Mammary epithelial cell (primary cell): ENCODE measurements at regions of chr3 and their contacts with region 1.

Region 1: DNA sequence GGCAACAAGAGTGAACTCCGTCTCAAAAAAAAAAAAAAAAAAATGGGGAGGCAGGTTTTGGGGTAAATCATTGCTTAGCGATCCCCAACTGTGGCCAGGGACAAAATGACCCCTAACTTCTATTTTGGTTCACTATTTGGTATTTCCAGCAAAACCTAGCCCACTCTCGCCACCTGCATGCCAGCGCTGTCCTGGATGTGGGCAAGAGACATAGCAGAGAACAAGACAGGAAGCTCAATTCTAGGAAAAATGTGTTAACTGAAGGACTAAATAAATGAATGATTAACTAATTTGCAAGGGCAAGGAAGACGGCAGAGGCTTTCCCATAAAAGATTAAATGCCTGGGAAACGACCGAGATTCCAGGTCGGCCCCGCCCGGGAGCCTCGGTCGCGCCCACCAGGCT is 425 bp downstream of the NICN1 start:
- DNase-seq: no peak
- H3K4me3 ChIP-seq: peak overlapping the region; percentile 74 to 79 (median 76)
- H3K27ac ChIP-seq: no peak overlapping the region
- H3K4me1 ChIP-seq: peaks cover 6% of the 10 kb centered on the region
- H3K27me3 ChIP-seq: no peaks in the 10 kb centered on the region
- CTCF ChIP-seq: no peak

Region 2: DNA sequence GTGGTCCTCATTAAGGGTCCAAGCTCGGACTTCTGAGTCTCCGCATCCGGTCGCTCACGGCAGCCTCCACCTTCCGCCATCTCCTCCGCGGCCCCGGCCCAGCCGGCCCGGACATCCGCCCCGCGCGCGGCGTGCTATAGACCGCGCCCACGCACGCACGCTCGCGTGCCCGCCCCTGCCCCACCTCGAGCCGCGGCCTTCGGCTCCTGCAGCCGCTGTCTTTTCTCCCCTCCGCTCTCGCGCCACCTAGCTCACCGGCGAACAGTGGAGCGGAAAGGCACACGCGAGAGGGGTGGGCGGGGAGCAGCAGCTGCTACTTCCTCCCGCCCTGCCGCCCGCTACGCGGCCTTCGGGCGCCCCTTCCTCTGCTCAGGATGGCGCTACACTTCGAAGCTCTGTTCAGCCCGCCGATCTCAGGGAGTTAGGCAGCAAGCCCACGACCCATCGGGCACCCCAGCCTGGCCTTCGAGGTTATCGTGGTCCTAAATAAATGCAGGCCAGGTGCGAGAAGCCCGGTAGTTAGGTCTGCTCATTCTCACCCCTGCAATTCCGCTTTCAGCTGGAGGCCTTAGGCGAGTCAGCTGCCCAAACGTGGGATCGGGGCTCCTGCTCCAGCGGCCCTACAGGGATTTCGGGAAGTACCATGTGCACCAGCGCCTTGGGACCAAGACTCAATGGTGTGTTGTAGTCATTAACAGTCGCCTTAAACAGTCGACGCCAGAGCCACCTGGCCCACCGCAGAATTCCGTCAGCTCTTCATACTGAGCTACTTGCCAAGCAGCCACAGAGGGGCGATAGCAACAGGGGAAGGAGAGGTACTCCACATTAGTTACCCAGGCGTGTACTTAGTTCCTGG is 88.5 kb before region 1 on chr3 and contains the start of gene USP4:
- CTCF ChIA-PET with region 1: no interaction called
- dilution Hi-C with region 1: no loop called
- in situ Hi-C with region 1: no loop called
- intact Hi-C with region 1: loop called (anchors 5 kb)
- DNase-seq: peak; percentile 85
- H3K4me3 ChIP-seq: peak within 1 kb of the TSS; percentile 68 to 86 (median 83)
- H3K27ac ChIP-seq: peak within 1 kb of the TSS; percentile 67
- H3K4me1 ChIP-seq: peaks cover 15% of the 10 kb centered on the region
- H3K27me3 ChIP-seq: no peaks in the 10 kb centered on the region
- CTCF ChIP-seq: peak; percentile 31 to 58
- total RNA-seq, gene USP4: 19.0 to 54.6 TPM